ENCODE measurements at regions of chr19 and their contacts with region 1.

Region 1: DNA sequence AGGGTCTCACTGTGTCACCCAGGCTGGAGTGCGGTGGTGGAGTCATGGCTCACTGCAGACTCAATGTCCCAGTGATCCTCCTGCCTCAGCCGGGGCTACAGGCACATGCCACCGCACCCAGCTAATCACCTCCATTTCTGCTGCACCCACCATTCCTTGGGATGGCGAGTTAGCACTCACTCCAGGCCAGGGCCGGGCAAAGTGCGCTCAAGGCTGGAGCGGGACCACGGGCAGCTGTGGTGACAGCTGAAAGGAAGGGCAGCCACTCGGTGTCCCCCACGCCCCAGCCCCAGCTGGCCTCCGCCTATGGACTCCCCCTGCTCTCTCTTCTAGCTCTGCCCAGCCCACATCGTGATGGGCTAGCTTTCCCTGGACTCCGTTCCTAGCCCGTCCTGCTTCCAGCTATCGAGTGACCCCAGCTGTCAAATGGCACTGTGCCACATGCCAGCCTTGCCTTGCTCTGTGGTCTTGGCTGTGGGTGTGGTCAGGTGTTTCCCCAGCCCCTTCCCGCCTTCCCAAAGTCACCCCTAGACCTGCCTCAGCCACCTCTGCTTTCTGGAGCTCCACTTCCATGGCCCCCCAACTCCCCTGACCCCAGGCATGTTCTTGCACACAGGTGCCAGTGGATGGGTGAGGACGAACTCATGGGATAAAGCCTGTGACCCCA is 4.1 kb downstream of the MICOS13 start:
- DNase-seq: no peak
- ATAC-seq: no peak
- H3K4me3 ChIP-seq: no peak overlapping the region
- H3K27ac ChIP-seq: no peak overlapping the region
- H3K4me1 ChIP-seq: peaks cover 8% of the 10 kb centered on the region; the same call in 1 of the 2 replicates
- H3K27me3 ChIP-seq: no peaks in the 10 kb centered on the region
- CTCF ChIP-seq: no peak

Region 2: DNA sequence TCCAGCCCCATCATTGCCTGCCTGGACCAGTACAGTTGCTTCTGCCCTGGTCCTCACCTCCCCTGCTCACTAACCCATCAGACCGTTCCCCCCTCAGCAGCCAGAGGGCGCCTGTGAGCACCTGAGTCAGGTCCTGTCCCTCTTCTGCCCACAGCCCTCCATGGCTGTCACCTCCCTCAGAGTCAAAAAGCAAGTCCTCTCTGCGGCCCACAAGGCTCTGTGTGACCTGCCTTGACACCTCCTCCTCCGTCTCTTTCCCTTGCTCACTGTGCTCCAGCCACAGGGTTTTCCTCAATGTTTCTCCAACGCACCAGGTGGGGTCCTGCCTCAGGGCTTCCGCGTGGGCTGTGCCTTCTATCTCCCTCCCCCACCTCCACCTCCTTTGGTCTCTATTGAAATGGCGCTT is 306.3 kb before region 1 on chr19:
- CTCF ChIA-PET with region 1: no interaction called
- POLR2A ChIA-PET with region 1: interaction called, 10 read pairs
- intact Hi-C with region 1: no loop called
- DNase-seq: peak; percentile 65
- ATAC-seq: peak; percentile 67
- H3K4me3 ChIP-seq: no peak overlapping the region
- H3K27ac ChIP-seq: no peak overlapping the region
- H3K4me1 ChIP-seq: no peaks in the 10 kb centered on the region
- H3K27me3 ChIP-seq: peaks cover 11% of the 10 kb centered on the region; the same call in 1 of the 2 replicates
- CTCF ChIP-seq: peak; percentile 79

Measured in PC-3 (cell line).